Adrenal gland (tissue), 19 donors: ENCODE measurements at regions of chr2 and their contacts with region 1.

Region 1: GRCh38 chr2:174039551-174040416 is 74.6 kb upstream of the SP3 start:
- DNase-seq: peak; percentile 84 to 96 (median 90)
- H3K4me3 ChIP-seq: peak overlapping the region in 1 of 4 donors; percentile 42
- H3K27ac ChIP-seq: peak overlapping the region in 4 of 5 donors; percentile 54 to 97 (median 70)
- H3K4me1 ChIP-seq: peaks cover 3 to 16% of the 10 kb centered on the region in 2 donors
- H3K27me3 ChIP-seq: no peaks in the 10 kb centered on the region
- CTCF ChIP-seq: peak; percentile 62 to 93 (median 84)
- POLR2A ChIP-seq: no peak

Region 2: GRCh38 chr2:173402405-173402974 is 637.3 kb before region 1 on chr2:
- intact Hi-C with region 1: loop called in 1 of 2 experiments (anchors 10 kb)
- DNase-seq: peak; percentile 76 to 90 (median 82)
- H3K4me3 ChIP-seq: no peak overlapping the region
- H3K27ac ChIP-seq: no peak overlapping the region
- H3K4me1 ChIP-seq: peaks cover 0 to 7% of the 10 kb centered on the region in 2 donors
- H3K27me3 ChIP-seq: peaks cover 39% of the 10 kb centered on the region
- CTCF ChIP-seq: peak; percentile 78 to 91 (median 82)
- POLR2A ChIP-seq: no peak

Region 3: GRCh38 chr2:173571021-173571882 is 468.5 kb before region 1 on chr2:
- intact Hi-C with region 1: loop called in 1 of 2 experiments (anchors 10 kb)
- DNase-seq: peak in 3 of 7 donors; percentile 8 to 18 (median 11)
- H3K4me3 ChIP-seq: no peak overlapping the region
- H3K27ac ChIP-seq: no peak overlapping the region
- H3K4me1 ChIP-seq: peaks cover 0 to 7% of the 10 kb centered on the region in 2 donors
- H3K27me3 ChIP-seq: peaks cover 13% of the 10 kb centered on the region
- CTCF ChIP-seq: peak in 5 of 6 experiments; percentile 26 to 42 (median 35)
- POLR2A ChIP-seq: no peak

Region 4: DNA sequence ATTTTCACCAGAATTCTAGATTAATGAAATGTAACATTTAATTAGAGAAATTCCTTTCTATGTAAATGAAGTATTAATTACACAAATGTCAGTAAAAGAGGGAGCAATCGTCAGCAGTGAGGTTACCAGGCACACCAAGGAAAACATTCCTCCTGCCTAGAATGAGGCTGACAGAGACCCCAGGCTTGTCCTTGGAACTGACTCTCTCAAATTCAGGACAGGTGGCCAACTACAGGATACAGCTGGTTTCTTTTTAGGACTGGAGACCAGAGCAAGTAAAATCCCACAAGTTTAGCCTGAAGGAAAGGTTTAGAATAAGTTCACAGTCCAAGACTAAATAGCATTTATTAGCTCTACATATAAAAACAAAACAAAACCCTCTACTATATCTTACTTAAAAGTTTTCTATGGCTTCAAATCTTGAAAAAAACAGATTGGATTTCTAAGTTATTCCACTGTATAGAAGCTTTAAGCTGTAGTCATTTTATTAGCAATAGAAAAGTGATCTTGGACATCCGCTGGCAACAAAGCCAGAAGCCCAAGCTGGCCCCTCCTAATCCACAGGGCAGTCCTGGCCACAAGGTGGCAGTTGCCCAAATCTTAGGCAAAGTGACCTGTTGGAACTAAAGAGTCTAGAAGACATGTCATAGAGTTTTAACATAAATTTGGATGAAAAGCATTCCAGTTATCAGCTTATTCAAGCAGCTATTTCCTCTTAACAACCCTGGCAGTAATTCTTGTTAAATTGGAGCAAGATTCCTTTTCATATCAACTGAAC is 155.6 kb before region 1 on chr2:
- intact Hi-C with region 1: loop called (anchors 10 kb)
- DNase-seq: peak; percentile 38 to 87 (median 73)
- H3K4me3 ChIP-seq: no peak overlapping the region
- H3K27ac ChIP-seq: no peak overlapping the region
- H3K4me1 ChIP-seq: no peaks in the 10 kb centered on the region
- H3K27me3 ChIP-seq: no peaks in the 10 kb centered on the region
- CTCF ChIP-seq: peak; percentile 44 to 66 (median 62)
- POLR2A ChIP-seq: no peak

Region 5: GRCh38 chr2:174603280-174603679 is 563.5 kb after region 1 on chr2:
- intact Hi-C with region 1: no loop called
- DNase-seq: peak; percentile 60 to 82 (median 73)
- H3K4me3 ChIP-seq: no peak overlapping the region
- H3K27ac ChIP-seq: peak overlapping the region in 1 of 5 donors; percentile 7
- H3K4me1 ChIP-seq: peaks cover under 1 to 20% of the 10 kb centered on the region in 2 donors
- H3K27me3 ChIP-seq: no peaks in the 10 kb centered on the region
- CTCF ChIP-seq: peak; percentile 32 to 61 (median 52)
- POLR2A ChIP-seq: no peak